Spleen (tissue), 13 donors: ENCODE measurements at regions of chr16 and their contacts with region 1.

Region 1: DNA sequence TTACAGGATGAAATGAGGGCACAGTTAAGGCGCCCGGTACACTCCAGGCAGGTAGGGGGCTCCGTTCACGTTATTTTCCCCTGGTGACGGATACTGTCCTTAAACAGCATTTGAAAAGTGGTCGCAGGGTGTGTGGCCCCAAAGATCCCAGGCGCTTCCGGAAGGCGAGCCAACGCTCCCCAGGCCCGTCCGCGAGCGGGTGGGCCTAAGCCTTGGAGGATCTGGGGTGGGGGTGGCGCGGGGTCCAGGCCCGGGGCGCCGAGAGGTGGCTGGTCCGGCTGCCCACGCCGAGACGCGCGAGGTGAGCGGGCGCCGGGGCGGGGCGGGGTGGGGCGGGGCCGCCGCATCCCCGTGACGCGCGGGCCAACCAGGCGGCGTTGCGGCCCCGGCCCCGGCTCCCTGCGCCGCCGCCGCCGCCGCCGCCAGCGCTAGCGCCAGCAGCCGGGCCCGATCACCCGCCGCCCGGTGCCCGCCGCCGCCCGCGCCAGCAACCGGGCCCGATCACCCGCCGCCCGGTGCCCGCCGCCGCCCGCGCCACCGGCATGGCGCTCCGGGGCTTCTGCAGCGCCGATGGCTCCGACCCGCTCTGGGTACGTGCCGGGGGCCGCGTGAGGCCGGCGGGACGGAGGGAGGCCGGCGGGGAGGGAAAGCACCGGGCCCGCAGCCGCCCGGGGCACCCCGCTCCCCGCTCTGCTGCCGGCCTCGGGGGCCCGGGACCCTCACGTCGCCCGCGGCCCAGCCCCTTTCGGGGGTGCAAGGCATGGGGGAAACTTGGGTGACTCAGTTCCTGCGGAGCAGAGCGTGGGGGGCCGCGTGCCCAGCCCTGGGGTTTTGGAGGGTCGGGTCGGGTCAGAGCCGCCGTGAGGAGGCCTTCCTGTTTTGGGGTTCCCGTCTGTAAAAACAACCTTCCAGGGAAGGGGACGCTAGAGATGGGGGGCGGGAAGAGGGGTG is at the start of gene ABCC1:
- DNase-seq: peak; percentile 90
- H3K4me3 ChIP-seq: peak within 1 kb of the TSS; percentile 41 to 94 (median 74)
- H3K27ac ChIP-seq: peak within 1 kb of the TSS; percentile 53 to 93 (median 86)
- H3K4me1 ChIP-seq: peaks cover 19 to 60% (median 46%) of the 10 kb centered on the region in 6 donors
- H3K27me3 ChIP-seq: no peaks in the 10 kb centered on the region
- CTCF ChIP-seq: peak in 2 of 11 experiments; percentile 26 to 30
- POLR2A ChIP-seq: no peak
- total RNA-seq, gene ABCC1: 48.8 to 65.7 (median 53.6) TPM

Region 2: GRCh38 chr16:15899538-15900100 is 49.9 kb before region 1 on chr16:
- intact Hi-C with region 1: loop called (anchors 10 kb)
- DNase-seq: no peak
- H3K4me3 ChIP-seq: no peak overlapping the region
- H3K27ac ChIP-seq: no peak overlapping the region
- H3K4me1 ChIP-seq: peaks cover 0 to 32% (median 2%) of the 10 kb centered on the region in 6 donors
- H3K27me3 ChIP-seq: no peaks in the 10 kb centered on the region
- CTCF ChIP-seq: no peak
- POLR2A ChIP-seq: no peak

Region 3: GRCh38 chr16:16033208-16033717 is 83.8 kb after region 1 on chr16:
- intact Hi-C with region 1: no loop called
- DNase-seq: no peak
- H3K4me3 ChIP-seq: no peak overlapping the region
- H3K27ac ChIP-seq: peak overlapping the region; percentile 1 to 74 (median 54)
- H3K4me1 ChIP-seq: peaks cover 3 to 47% (median 15%) of the 10 kb centered on the region in 6 donors
- H3K27me3 ChIP-seq: no peaks in the 10 kb centered on the region
- CTCF ChIP-seq: no peak
- POLR2A ChIP-seq: no peak